PC-3 (cell line): ENCODE measurements at regions of chr10 and their contacts with region 1.

Region 1: GRCh38 chr10:74826142-74827044 is at the start of gene KAT6B:
- DNase-seq: peak; percentile 100
- ATAC-seq: peak; percentile 73
- H3K4me3 ChIP-seq: peak within 1 kb of the TSS; percentile 74
- H3K27ac ChIP-seq: peak within 1 kb of the TSS; percentile 79
- H3K4me1 ChIP-seq: peaks cover 53% of the 10 kb centered on the region
- H3K27me3 ChIP-seq: no peaks in the 10 kb centered on the region
- CTCF ChIP-seq: peak; percentile 61
- total RNA-seq, gene KAT6B: 83.0 and 94.5 TPM in 2 replicates

Region 2: DNA sequence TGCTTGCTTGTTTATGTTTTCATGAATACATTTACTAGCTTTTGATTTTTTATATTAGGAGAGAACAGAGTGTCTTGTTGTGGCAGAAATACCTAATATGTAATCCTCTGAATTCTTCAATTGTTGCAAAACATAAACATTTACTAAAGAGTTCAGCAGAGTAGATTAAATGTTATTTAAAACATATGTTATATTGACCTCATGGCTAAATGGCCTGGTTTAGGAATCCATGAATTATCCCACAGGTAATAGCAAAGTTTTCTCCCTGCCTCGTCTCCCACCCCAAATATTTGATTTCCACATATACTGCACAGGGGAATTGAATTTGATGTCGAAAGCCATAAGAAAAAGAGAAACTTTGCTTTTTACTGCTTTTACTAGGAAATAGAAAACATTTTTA is 563.5 kb before region 1 on chr10:
- CTCF ChIA-PET with region 1: no interaction called
- POLR2A ChIA-PET with region 1: interaction called, 5 read pairs
- intact Hi-C with region 1: loop called (anchors 1 kb)
- DNase-seq: no peak
- ATAC-seq: no peak
- H3K4me3 ChIP-seq: no peak overlapping the region
- H3K27ac ChIP-seq: no peak overlapping the region
- H3K4me1 ChIP-seq: peaks cover 12% of the 10 kb centered on the region
- H3K27me3 ChIP-seq: no peaks in the 10 kb centered on the region
- CTCF ChIP-seq: no peak

Region 3: GRCh38 chr10:74548676-74549075 is 277.7 kb before region 1 on chr10:
- CTCF ChIA-PET with region 1: no interaction called
- POLR2A ChIA-PET with region 1: no interaction called
- intact Hi-C with region 1: loop called (anchors 1 kb)
- DNase-seq: peak; percentile 100
- ATAC-seq: peak; percentile 97
- H3K4me3 ChIP-seq: peak overlapping the region; percentile 4; the same call in 1 of the 2 replicates
- H3K27ac ChIP-seq: peak overlapping the region; percentile 66
- H3K4me1 ChIP-seq: peaks cover 21% of the 10 kb centered on the region
- H3K27me3 ChIP-seq: no peaks in the 10 kb centered on the region
- CTCF ChIP-seq: no peak

Region 4: DNA sequence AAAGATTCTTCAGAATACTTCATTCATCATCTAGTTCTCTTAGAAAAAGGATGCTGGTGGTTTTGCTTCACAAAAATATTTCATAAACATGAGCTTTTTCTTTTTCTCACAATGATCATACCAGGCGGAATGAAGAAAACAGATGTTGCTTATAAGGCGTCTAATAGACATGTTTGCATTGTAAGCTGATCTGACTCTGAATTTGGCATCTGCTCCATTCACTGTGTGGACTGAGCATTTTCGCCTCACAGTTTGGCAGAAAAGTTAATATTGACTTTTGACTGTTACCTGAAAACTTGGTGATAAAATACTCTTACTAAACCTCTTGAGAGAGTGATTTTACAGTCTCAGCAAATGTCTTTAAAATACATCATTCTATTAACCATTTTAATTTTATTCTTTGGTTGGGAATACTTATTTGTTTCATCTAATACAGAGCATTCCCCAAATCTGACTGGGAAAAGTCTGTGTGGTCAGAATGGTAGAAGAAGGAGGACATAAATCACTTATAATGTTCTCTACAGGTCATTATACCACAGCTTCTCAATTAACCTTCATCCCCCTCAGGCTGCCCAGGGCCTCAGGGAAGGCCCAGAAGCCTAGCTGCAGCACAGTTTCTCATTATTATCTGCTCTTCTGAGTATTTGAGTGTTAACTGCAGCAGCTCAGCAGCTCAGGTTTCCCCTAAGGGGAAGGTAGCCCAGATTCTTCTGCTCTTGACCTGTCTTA is 121.6 kb before region 1 on chr10:
- CTCF ChIA-PET with region 1: no interaction called
- POLR2A ChIA-PET with region 1: no interaction called
- intact Hi-C with region 1: loop called (anchors 1 kb)
- DNase-seq: peak; percentile 95
- ATAC-seq: peak; percentile 95
- H3K4me3 ChIP-seq: no peak overlapping the region
- H3K27ac ChIP-seq: peak overlapping the region; percentile 28
- H3K4me1 ChIP-seq: peaks cover 15% of the 10 kb centered on the region
- H3K27me3 ChIP-seq: no peaks in the 10 kb centered on the region
- CTCF ChIP-seq: no peak

Region 5: DNA sequence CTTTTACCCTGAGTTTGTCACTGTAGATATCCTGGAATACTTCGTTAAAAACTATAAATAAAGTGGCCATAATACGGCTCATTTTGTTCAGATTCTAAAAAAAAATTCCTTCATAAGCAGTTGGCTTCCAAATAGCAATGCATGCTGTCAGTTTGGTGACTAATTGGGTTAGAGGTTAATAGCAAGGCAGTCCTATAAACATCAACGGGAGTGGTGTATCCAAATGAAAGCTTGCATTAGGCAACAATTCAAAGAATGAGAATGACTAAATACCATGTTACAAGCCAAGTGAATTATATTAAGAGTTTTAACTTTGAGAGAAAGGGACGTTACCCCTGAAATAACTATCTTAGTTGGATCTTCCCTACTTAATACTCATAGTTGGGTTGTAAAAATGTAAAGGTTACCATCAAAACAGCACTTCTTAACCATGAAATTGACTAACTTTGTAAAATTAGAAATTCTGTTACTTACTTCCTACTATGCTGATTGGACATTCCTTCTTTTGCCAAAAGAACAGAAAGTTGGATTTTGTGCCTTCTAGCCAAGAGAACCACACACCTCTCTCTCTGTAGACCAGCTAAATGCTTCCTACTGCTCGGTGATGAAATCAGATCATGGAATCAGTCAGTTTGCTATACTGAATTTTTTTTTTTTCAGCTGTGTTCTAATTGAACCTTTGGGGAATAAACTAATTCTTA is 98.0 kb after region 1 on chr10:
- CTCF ChIA-PET with region 1: interaction called, 3 read pairs
- POLR2A ChIA-PET with region 1: interaction called, 4 read pairs
- intact Hi-C with region 1: loop called (anchors 1 kb)
- DNase-seq: peak; percentile 100
- ATAC-seq: peak; percentile 67
- H3K4me3 ChIP-seq: peak overlapping the region; percentile 49
- H3K27ac ChIP-seq: peak overlapping the region; percentile 78
- H3K4me1 ChIP-seq: peaks cover 90% of the 10 kb centered on the region
- H3K27me3 ChIP-seq: no peaks in the 10 kb centered on the region
- CTCF ChIP-seq: no peak

Region 6: GRCh38 chr10:74991440-74992130 is 165.2 kb after region 1 on chr10:
- CTCF ChIA-PET with region 1: no interaction called
- POLR2A ChIA-PET with region 1: no interaction called
- intact Hi-C with region 1: no loop called
- DNase-seq: peak; percentile 97
- ATAC-seq: peak; percentile 74
- H3K4me3 ChIP-seq: no peak overlapping the region
- H3K27ac ChIP-seq: no peak overlapping the region
- H3K4me1 ChIP-seq: peaks cover 14% of the 10 kb centered on the region
- H3K27me3 ChIP-seq: no peaks in the 10 kb centered on the region
- CTCF ChIP-seq: peak; percentile 99

Region 7: DNA sequence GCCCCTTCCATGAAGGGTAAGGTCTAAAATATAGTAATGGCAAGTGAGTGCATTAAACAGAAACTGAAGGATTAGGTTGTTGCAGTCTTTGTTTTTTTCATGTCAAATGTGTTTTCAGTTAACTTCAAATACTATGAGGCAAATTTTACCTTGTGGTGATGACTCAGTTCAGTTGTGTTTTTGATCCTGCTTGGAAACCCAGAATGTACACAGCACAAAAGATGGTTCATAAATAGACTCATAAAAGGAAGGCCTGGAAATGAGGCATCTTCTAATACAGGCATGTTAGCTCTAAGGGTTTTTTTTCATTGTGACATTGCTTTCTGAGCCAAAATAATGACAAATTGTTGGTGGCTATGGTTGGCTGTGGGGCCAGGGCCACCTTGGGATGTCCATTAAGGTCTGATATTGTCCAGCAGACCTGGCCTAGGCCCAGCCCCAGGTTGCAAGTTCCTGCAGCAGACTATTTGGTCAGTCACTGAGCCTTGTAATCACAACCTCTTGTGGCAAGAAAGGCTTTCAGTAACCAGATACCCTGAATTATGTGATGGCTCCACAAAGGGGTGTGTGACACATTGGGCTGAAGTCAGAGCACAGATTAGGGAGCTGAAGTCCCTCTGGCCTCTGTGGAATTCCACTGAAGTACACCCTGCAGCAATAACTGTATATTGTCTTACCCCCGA is 216.0 kb after region 1 on chr10:
- CTCF ChIA-PET with region 1: no interaction called
- POLR2A ChIA-PET with region 1: interaction called, 4 read pairs
- intact Hi-C with region 1: loop called (anchors 1 kb)
- DNase-seq: peak; percentile 93
- ATAC-seq: peak; percentile 93
- H3K4me3 ChIP-seq: no peak overlapping the region
- H3K27ac ChIP-seq: peak overlapping the region; percentile 63
- H3K4me1 ChIP-seq: peaks cover 18% of the 10 kb centered on the region
- H3K27me3 ChIP-seq: no peaks in the 10 kb centered on the region
- CTCF ChIP-seq: no peak